Esophagus muscularis mucosa (tissue), 4 donors: ENCODE measurements at regions of chr6 and their contacts with region 1.

Region 1: GRCh38 chr6:17706580-17707370 is at the start of gene NUP153:
- DNase-seq: peak; percentile 100
- H3K4me3 ChIP-seq: peak within 1 kb of the TSS; percentile 75 to 99 (median 90)
- H3K27ac ChIP-seq: peak within 1 kb of the TSS; percentile 97 to 100 (median 99)
- H3K4me1 ChIP-seq: peaks cover 33 to 40% (median 34%) of the 10 kb centered on the region in 4 donors
- H3K27me3 ChIP-seq: no peaks in the 10 kb centered on the region
- CTCF ChIP-seq: no peak
- EP300 ChIP-seq: no peak
- POLR2A ChIP-seq: peak; percentile 74
- total RNA-seq, gene NUP153: 28.4 to 32.8 (median 31.5) TPM

Region 2: GRCh38 chr6:17584241-17584803 is 122.5 kb before region 1 on chr6:
- intact Hi-C with region 1: no loop called
- DNase-seq: no peak
- H3K4me3 ChIP-seq: peak overlapping the region; percentile 22 to 39 (median 22)
- H3K27ac ChIP-seq: peak overlapping the region; percentile 65 to 80 (median 75)
- H3K4me1 ChIP-seq: peaks cover 10 to 21% (median 14%) of the 10 kb centered on the region in 4 donors
- H3K27me3 ChIP-seq: no peaks in the 10 kb centered on the region
- CTCF ChIP-seq: peak; percentile 73 to 96 (median 84)
- EP300 ChIP-seq: no peak
- POLR2A ChIP-seq: no peak

Region 3: GRCh38 chr6:17599885-17600526 is 106.8 kb before region 1 on chr6 and contains the start of gene FAM8A1:
- intact Hi-C with region 1: loop called (anchors 10 kb)
- DNase-seq: peak; percentile 97
- H3K4me3 ChIP-seq: peak within 1 kb of the TSS; percentile 72 to 99 (median 96)
- H3K27ac ChIP-seq: peak within 1 kb of the TSS; percentile 95 to 99 (median 98)
- H3K4me1 ChIP-seq: peaks cover 14 to 32% (median 24%) of the 10 kb centered on the region in 4 donors
- H3K27me3 ChIP-seq: no peaks in the 10 kb centered on the region
- CTCF ChIP-seq: peak; percentile 42 to 73 (median 67)
- EP300 ChIP-seq: no peak
- POLR2A ChIP-seq: peak; percentile 28
- total RNA-seq, gene FAM8A1: 36.8 to 58.8 (median 40.9) TPM

Region 4: GRCh38 chr6:18155150-18155863 is 448.5 kb after region 1 on chr6 and contains the start of gene KDM1B:
- intact Hi-C with region 1: loop called (anchors 10 kb)
- DNase-seq: peak; percentile 99
- H3K4me3 ChIP-seq: peak within 1 kb of the TSS; percentile 92 to 94 (median 93)
- H3K27ac ChIP-seq: peak within 1 kb of the TSS; percentile 83 to 92 (median 86)
- H3K4me1 ChIP-seq: peaks cover 15 to 25% (median 22%) of the 10 kb centered on the region in 4 donors
- H3K27me3 ChIP-seq: no peaks in the 10 kb centered on the region
- CTCF ChIP-seq: no peak
- EP300 ChIP-seq: no peak
- POLR2A ChIP-seq: peak; percentile 10
- total RNA-seq, gene KDM1B: 10.3 to 13.2 (median 11.7) TPM